Naive thymus-derived CD4-positive, alpha-beta T cell (primary cell): ENCODE measurements at regions of chr1 and their contacts with region 1.

Region 1: DNA sequence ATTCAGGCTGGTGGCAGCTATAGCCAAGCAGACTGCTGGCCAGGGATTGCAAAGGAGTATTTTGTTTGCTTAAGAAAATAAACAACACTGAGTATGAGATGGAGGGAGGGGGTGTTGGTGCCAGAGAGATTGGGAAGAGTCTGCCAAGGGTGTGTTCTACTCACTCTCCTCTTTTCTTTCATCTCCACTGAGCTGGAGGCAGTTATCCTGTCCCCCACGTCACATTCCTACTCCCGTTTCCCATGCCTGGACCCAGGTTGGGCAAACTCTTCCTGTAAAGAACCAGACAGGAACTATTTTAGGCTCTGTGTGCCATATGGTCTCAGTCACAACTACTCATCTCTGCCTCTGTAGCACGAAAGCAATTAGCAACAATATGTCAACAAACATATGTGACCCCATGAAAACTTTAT is 1.4 kb upstream of the IL24 start:
- DNase-seq: no peak
- ATAC-seq: no peak
- H3K4me3 ChIP-seq: no peak overlapping the region
- H3K4me3 Mint-ChIP-seq: no peak overlapping the region
- H3K27ac ChIP-seq: no peak overlapping the region
- H3K27ac Mint-ChIP-seq: peak overlapping the region in 6 of 9 donors; percentile 28 to 75 (median 54)
- H3K4me1 ChIP-seq: peaks cover 4 to 39% of the 10 kb centered on the region in 2 donors
- H3K4me1 Mint-ChIP-seq: peaks cover 26 to 85% (median 73%) of the 10 kb centered on the region in 7 donors
- H3K27me3 ChIP-seq: no peaks in the 10 kb centered on the region
- H3K27me3 Mint-ChIP-seq: no peaks in the 10 kb centered on the region

Region 2: DNA sequence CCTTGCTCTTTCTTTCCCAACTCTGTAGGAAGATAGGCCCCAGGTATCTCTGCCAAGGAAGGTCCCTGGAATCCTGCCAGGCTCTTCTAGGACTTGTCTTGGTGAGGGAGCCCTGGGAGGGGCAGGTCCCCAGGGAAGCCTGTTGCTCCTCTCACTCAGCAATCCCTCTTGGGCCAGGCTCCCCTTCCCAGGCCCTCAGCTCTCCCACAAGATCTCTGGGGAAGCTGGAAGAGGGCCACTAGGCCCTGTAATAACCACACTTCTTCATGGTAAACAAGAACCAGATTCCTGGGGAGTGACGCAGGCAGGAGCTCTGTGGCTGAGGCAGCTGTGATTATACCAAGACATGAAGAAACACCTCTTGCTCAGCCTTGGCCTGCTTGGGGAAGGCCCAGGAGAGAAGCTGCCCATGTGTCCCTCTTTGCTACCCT is 221.1 kb before region 1 on chr1:
- CTCF ChIA-PET with region 1: no interaction called
- POLR2A ChIA-PET with region 1: no interaction called
- intact Hi-C with region 1: no loop called
- DNase-seq: no peak
- ATAC-seq: no peak
- H3K4me3 ChIP-seq: no peak overlapping the region
- H3K4me3 Mint-ChIP-seq: no peak overlapping the region
- H3K27ac ChIP-seq: no peak overlapping the region
- H3K27ac Mint-ChIP-seq: no peak overlapping the region
- H3K4me1 ChIP-seq: no peaks in the 10 kb centered on the region
- H3K4me1 Mint-ChIP-seq: peaks cover 0 to 5% (median 0%) of the 10 kb centered on the region in 7 donors
- H3K27me3 ChIP-seq: no peaks in the 10 kb centered on the region
- H3K27me3 Mint-ChIP-seq: peaks cover 0 to 12% (median 5%) of the 10 kb centered on the region in 5 donors

Region 3: GRCh38 chr1:206882519-206882918 is 13.3 kb before region 1 on chr1:
- CTCF ChIA-PET with region 1: interaction called, 3 read pairs
- POLR2A ChIA-PET with region 1: interaction called, 15 read pairs
- intact Hi-C with region 1: no loop called
- DNase-seq: no peak
- ATAC-seq: no peak
- H3K4me3 ChIP-seq: no peak overlapping the region
- H3K4me3 Mint-ChIP-seq: no peak overlapping the region
- H3K27ac ChIP-seq: no peak overlapping the region
- H3K27ac Mint-ChIP-seq: no peak overlapping the region
- H3K4me1 ChIP-seq: no peaks in the 10 kb centered on the region
- H3K4me1 Mint-ChIP-seq: peaks cover 0 to 4% (median 0%) of the 10 kb centered on the region in 7 donors
- H3K27me3 ChIP-seq: no peaks in the 10 kb centered on the region
- H3K27me3 Mint-ChIP-seq: peaks cover 0 to 12% (median 0%) of the 10 kb centered on the region in 5 donors